ENCODE measurements at regions of chr2 and their contacts with region 1.

Region 1: DNA sequence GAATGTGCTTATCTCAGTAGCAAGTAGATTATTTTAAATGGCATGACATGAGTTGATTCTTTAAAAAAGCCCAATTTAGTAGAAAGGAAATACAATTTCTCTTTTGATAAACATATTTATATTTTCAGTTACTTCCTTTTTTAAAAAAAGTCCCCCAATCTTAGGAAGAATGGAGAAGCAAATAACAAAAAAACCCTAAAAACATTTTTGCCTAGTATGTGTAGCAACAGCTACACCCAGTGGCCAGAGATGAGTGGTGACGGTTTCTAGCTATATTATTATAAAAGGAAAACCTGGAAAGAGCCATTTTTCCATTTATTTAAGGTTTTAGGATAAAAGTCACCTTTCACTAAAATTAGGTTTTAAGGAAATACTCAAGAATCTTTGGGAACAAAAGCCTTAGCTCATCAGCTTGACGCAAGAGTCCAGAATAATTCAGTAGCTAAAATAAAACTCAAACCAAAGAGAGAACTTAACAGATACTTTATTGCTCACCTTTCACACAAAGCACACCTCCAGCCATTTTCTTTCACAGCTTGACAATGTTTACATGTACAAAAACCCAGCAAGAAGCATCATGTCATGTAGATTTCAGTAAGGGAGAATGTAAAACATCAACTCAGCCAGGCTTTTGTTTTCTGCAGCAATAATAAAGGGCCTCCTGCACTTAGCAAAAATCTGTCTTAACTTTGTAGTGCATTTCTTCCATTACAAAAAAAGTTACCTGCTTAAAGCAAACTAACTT is 15.7 kb downstream of the FAM98A start:
- DNase-seq: no peak
- H3K4me3 ChIP-seq: no peak overlapping the region
- H3K27ac ChIP-seq: no peak overlapping the region
- H3K4me1 ChIP-seq: no peaks in the 10 kb centered on the region
- H3K27me3 ChIP-seq: no peaks in the 10 kb centered on the region
- CTCF ChIP-seq: peak; percentile 71 to 83 (median 76)

Region 2: DNA sequence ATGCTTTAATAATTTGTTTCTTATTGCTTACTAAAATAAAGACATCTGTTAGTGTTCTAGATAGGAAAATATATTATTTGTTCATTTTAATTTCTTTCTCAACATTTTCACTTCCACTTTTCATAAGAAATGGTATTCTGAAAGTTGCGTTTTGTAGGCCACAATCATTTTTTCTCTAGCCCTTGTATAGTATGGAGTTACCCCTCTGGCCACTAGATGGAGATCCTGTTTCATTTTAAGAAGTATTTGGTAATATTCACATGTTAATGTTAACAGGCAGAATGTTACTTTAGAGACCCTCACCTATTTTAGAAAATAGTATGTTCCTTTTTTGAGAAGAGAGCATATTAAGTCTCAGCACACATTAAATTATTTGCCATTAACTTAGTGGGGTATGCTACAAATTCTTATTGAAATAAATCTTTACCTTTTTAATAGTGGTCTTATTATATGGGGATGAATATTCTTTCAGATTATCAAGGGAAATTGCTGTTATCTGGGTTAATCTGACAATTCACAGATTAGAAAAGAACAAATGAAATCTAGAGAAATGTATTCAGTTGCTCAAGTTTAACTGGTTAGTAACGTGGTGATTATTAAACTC is 1029.4 kb before region 1 on chr2:
- intact Hi-C with region 1: loop called (anchors 10 kb)
- DNase-seq: no peak
- H3K4me3 ChIP-seq: no peak overlapping the region
- H3K27ac ChIP-seq: no peak overlapping the region
- H3K4me1 ChIP-seq: no peaks in the 10 kb centered on the region
- H3K27me3 ChIP-seq: no peaks in the 10 kb centered on the region
- CTCF ChIP-seq: peak; percentile 58 to 70 (median 64)

Region 3: DNA sequence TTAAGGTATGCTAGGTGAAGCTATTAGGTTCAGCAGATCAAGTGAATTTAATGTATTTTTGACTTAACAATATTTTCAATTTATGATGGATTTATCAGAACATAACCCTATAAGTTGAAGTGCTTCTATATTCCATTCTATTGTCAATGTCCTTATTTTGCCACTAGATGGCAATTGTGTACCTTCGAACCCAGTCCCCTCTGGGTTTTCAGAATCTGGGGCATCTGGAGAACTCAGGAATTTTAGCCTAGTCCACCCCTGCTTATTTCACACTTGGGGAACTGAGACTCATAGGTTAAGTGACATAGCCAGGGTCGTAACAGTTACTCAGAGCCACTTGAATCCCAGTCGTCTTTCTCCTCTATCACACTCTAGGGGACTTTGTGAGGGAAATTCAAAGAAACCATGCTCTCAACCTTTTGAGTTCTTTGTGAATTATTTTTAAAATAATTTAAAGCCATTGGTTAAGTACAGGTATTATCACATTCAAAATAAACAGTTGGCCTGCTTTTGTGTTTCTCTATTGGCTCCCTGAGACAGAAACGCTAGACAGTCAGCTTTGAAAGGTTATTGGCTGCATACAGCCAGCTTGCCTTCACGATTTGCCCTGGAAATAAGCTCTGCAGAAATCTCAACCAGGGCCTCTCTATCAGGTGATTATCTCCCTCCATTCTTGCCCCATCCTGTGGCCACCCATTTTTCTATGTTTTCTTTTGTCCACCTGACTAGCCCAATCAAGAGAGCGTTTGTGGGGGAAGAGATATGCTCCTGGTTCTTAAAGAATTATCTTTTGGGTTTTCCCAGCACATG is 810.5 kb before region 1 on chr2:
- intact Hi-C with region 1: loop called (anchors 2 kb)
- DNase-seq: no peak
- H3K4me3 ChIP-seq: no peak overlapping the region
- H3K27ac ChIP-seq: no peak overlapping the region
- H3K4me1 ChIP-seq: no peaks in the 10 kb centered on the region
- H3K27me3 ChIP-seq: no peaks in the 10 kb centered on the region
- CTCF ChIP-seq: peak; percentile 52 to 68 (median 55)

Region 4: GRCh38 chr2:33033606-33034081 is 549.7 kb before region 1 on chr2:
- intact Hi-C with region 1: loop called (anchors 2 kb)
- DNase-seq: no peak
- H3K4me3 ChIP-seq: peak overlapping the region; percentile 27 to 67
- H3K27ac ChIP-seq: peak overlapping the region in 1 of 2 donors; percentile 29
- H3K4me1 ChIP-seq: peaks cover 0 to 12% of the 10 kb centered on the region in 2 donors
- H3K27me3 ChIP-seq: no peaks in the 10 kb centered on the region
- CTCF ChIP-seq: peak; percentile 66 to 76 (median 72)

Region 5: GRCh38 chr2:33372940-33373553 is 210.3 kb before region 1 on chr2:
- intact Hi-C with region 1: loop called (anchors 10 kb)
- DNase-seq: no peak
- H3K4me3 ChIP-seq: no peak overlapping the region
- H3K27ac ChIP-seq: peak overlapping the region in 1 of 2 donors; percentile 26
- H3K4me1 ChIP-seq: peaks cover 0 to 13% of the 10 kb centered on the region in 2 donors
- H3K27me3 ChIP-seq: no peaks in the 10 kb centered on the region
- CTCF ChIP-seq: peak; percentile 44 to 74 (median 65)

Region 6: GRCh38 chr2:33475224-33476130 is 107.9 kb before region 1 on chr2:
- intact Hi-C with region 1: loop called (anchors 2 kb)
- DNase-seq: peak in 1 of 2 donors; percentile 88
- H3K4me3 ChIP-seq: peak overlapping the region; percentile 56 to 71
- H3K27ac ChIP-seq: peak overlapping the region; percentile 79
- H3K4me1 ChIP-seq: peaks cover 0 to 5% of the 10 kb centered on the region in 2 donors
- H3K27me3 ChIP-seq: no peaks in the 10 kb centered on the region
- CTCF ChIP-seq: peak; percentile 78 to 88 (median 79)

Region 7: DNA sequence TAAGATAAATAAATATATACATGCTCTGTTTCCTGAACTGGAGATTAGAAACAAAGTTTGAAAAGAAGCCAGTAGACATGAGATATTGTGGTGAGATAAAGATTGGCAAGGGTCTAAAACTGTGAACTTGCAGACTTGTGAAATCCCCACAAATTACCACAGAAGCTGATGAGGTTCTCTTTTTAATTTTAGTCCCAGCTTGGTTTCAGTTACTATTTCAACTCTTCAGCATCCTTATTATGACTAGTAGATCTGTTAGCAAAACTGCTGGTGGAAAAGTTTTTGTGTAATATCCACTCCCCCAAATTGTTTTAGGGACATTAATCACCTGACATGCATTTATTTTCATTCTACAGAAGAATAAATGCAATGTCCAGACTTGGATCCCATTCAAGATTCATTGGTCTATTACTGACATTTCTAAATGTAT is 86.1 kb before region 1 on chr2:
- intact Hi-C with region 1: no loop called
- DNase-seq: no peak
- H3K4me3 ChIP-seq: no peak overlapping the region
- H3K27ac ChIP-seq: no peak overlapping the region
- H3K4me1 ChIP-seq: no peaks in the 10 kb centered on the region
- H3K27me3 ChIP-seq: no peaks in the 10 kb centered on the region
- CTCF ChIP-seq: no peak

Region 8: GRCh38 chr2:34447097-34447496 is 863.7 kb after region 1 on chr2:
- intact Hi-C with region 1: no loop called
- DNase-seq: no peak
- H3K4me3 ChIP-seq: no peak overlapping the region
- H3K27ac ChIP-seq: no peak overlapping the region
- H3K4me1 ChIP-seq: no peaks in the 10 kb centered on the region
- H3K27me3 ChIP-seq: no peaks in the 10 kb centered on the region
- CTCF ChIP-seq: no peak

Measured in ascending aorta (tissue), 2 donors.